Left ventricle myocardium superior (tissue), 1 donor: ENCODE measurements at regions of chr20 and their contacts with region 1.

Region 1: GRCh38 chr20:9359561-9360308 is 154.7 kb upstream of the LAMP5 start:
- DNase-seq: peak; percentile 41
- ATAC-seq: peak; percentile 79

Region 2: GRCh38 chr20:8790442-8791074 is 569.2 kb before region 1 on chr20:
- intact Hi-C with region 1: loop called (anchors 5 kb)
- DNase-seq: no peak
- ATAC-seq: peak; percentile 31

Region 3: GRCh38 chr20:8853805-8854338 is 505.9 kb before region 1 on chr20:
- intact Hi-C with region 1: loop called (anchors 10 kb)
- DNase-seq: no peak
- ATAC-seq: peak; percentile 84

Region 4: DNA sequence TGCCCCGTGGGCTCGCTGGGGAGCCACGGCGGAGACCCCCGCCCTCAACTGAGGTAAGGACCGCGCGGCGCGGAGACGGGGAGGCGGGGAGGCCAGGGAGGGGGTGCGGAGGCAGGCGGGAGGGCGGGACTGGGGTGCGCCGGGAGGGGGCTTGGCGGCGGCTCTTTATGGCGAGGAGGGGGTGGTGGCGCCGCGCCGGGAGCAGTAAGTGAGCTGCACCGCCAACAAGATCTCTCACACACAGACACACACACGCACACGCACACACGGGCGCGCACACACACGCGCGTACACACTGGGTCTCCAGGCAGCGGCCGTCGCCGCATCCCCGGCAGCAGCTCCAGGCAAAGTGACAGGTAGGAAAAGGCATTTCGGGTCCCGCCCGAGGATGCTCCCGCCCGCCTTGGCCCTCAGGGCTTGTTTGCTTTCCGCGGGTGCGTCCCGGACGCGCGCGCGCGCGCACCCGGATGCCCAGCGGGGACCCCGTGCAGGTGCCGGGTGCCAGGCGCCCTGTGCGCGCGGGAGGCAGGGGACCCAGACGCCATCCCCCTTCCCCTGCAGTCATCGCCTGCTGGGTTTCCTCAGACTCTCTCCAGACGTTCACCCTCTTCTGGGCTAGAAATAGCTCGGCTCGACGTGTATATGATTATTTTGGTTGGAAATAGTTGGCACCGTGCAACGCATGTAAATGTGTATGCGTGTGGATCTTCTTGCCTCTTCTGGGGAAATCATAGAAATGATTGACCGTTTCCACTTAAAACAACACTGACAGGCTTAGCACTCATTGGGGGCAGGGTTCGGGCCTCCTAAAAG is 290.7 kb before region 1 on chr20 and contains the start of gene PLCB4:
- intact Hi-C with region 1: loop called (anchors 10 kb)
- DNase-seq: peak; percentile 73
- ATAC-seq: peak; percentile 33
- total RNA-seq, gene PLCB4: 29.1 TPM

Region 5: DNA sequence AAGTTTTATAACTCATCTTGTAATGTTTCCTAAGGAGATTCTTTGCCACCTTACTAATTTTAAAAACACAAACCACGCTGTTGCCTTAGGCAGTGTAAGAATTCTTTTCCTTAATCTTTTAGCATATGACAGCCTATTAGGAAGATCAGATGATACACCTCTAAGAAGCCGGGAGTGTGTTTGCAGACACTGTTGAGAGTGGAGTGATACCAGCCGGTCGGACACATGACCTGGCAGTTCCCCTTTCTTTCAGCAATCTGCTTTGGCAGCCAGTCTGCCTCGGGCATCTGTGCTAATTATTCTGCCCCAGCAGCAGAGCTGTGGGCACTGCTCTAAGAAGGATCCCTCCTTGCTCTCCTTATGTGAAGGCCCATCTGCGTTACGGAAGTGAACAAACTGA is 240.0 kb before region 1 on chr20:
- intact Hi-C with region 1: no loop called
- DNase-seq: peak; percentile 71
- ATAC-seq: peak; percentile 99

Region 6: DNA sequence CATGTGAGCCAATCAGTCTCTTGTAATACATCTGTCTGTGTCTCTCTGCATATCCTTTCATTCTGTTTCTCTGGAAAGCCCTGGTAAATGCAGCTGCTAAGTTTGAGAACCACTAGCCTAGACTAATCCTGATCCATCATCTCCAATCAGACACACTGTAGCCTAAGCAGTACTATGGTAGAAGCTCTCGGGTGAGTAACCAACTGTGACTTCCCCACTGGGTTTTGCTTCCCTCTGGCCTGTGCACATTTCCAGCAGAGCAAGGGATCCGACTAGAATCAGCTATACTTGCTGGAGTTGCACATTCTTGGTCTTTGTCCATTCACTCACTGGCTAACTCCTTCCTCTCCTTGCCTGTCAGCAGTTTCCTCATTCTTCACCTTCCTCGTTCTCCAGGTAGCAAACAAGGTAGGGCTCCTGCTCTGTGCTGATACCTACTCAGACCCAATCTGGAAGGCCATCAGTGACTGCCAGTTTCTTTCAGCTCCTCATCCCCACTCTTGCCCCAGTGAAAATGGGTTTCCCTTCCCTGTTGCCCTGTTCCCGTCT is 106.7 kb before region 1 on chr20:
- intact Hi-C with region 1: no loop called
- DNase-seq: no peak
- ATAC-seq: no peak

Region 7: DNA sequence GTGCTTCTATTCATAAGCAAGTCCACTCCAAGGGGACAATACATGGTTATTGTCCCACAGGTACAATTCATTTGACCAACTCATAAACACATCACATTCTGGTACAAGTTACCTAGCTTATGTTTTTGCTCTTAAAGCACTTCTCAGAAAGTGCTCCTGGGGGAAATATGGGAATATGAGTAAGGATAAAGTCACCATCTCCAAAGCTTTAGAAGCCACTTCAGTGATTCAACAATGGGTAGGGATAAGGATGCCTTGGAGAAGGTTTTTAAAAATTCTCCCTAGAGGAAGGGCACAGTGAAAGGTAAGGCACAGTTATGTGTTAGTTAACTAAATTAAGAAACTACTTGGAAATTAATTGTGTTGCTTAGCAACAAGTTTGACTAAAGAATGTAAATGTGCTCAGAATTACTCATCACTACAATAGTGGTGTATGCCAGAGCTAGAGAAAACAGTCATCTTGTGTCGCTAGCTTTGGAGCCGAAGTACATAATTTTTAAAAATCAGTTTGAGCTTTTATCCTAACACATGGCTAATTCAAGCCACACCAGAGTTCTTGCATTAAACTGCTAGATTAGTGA is 115.2 kb after region 1 on chr20:
- intact Hi-C with region 1: no loop called
- DNase-seq: no peak
- ATAC-seq: no peak